Activated CD4-positive, alpha-beta memory T cell treated with anti-CD3 and anti-CD28 coated beads for 36 hours (primary cell): ENCODE measurements at regions of chr1 and their contacts with region 1.

Region 1: DNA sequence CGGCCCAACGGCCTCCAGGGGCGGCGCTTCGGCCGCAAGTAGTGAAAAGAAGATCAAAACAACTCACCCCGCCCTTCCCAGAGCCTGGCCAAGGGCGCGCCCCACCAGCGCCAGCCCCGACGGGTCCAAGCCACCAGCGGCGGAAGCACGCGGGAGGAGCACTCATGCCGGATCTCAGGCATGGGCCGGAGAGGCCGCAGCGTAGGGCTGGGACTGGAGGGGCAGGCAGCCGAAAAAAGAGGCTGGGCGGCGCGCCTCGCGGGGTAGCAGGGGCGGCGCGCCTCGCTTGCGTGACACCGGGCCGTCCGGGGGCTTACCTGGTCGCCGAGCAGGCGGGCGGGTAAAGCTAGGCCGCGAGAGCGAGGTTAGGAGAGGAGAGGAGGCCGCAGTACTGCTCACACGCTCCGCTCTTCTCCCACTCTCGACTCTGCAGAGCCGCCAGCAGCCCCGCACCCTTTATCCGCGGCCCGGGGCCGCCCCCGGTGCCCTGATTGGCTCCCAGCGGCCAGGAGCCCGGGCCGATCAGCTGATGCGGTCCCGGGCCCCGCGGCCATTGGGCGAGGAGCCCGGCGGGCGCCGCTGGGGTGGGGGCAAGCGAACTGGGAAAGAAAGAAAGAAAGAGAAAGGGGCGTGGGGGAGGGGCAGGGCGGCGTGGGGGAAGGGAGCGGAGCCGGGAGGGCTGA is at the start of gene GLUL:
- DNase-seq: peak; percentile 82
- H3K4me3 Mint-ChIP-seq: peak within 1 kb of the TSS; percentile 93
- H3K27ac Mint-ChIP-seq: peak within 1 kb of the TSS; percentile 80
- H3K4me1 Mint-ChIP-seq: peaks cover 22% of the 10 kb centered on the region
- H3K27me3 Mint-ChIP-seq: peaks cover 7% of the 10 kb centered on the region
- total RNA-seq, gene GLUL: 61.3 to 63.9 TPM

Region 2: DNA sequence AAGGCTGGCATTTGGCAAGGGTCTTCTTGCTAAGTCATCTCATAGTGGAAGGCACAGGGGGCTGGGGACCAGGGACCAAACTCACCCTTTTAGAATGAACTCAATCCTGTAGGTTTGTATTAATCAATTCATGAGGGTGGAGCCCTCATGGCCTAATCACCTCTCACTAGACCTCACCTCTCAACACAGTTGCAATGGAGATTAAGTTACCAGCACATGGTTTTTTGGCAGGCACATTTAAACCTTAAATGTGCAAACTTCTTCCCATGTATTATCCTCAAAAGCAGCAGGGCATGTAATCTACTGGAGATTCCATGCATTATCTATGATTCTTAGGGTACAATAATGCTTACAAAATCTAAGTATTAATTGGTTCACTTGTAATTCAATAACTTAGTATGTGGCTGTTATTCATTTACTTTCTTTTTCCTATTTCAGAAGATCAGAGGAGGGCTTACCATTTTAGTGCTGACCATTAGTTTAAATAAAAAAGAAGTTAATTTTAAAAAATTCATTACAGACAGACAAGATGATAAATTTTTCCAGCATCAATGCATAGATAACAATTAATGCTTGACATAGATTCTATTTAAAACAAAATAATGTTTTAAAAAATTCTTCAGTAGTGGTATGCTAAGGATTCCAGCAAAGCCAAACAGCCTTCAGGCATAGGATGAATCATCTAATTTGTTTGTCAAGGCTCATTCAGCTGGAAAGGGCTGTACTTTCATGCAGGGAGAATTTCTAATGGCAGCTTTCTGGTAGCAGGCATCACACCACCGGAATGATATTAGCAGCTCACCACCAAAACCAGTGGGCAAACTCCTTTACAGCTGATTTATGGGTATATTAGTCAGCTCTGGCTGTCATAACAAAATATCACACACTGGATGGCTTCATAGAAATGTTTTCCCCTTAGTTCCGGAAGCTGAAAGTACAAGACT is 205.4 kb before region 1 on chr1:
- CTCF ChIA-PET with region 1: interaction called, 6 read pairs
- POLR2A ChIA-PET with region 1: no interaction called
- intact Hi-C with region 1: loop called (anchors 2 kb)
- DNase-seq: no peak
- H3K4me3 Mint-ChIP-seq: no peak overlapping the region
- H3K27ac Mint-ChIP-seq: no peak overlapping the region
- H3K4me1 Mint-ChIP-seq: peaks cover 4% of the 10 kb centered on the region
- H3K27me3 Mint-ChIP-seq: peaks cover 11% of the 10 kb centered on the region

Region 3: GRCh38 chr1:182301467-182302198 is 89.9 kb before region 1 on chr1:
- CTCF ChIA-PET with region 1: interaction called, 4 read pairs
- POLR2A ChIA-PET with region 1: no interaction called
- intact Hi-C with region 1: loop called (anchors 1 kb)
- DNase-seq: peak; percentile 65
- H3K4me3 Mint-ChIP-seq: no peak overlapping the region
- H3K27ac Mint-ChIP-seq: peak overlapping the region; percentile 80
- H3K4me1 Mint-ChIP-seq: peaks cover 28% of the 10 kb centered on the region
- H3K27me3 Mint-ChIP-seq: no peaks in the 10 kb centered on the region

Region 4: GRCh38 chr1:182430263-182431068 is 39.0 kb after region 1 on chr1:
- CTCF ChIA-PET with region 1: no interaction called
- POLR2A ChIA-PET with region 1: no interaction called
- intact Hi-C with region 1: loop called (anchors 1 kb)
- DNase-seq: peak; percentile 62
- H3K4me3 Mint-ChIP-seq: no peak overlapping the region
- H3K27ac Mint-ChIP-seq: no peak overlapping the region
- H3K4me1 Mint-ChIP-seq: peaks cover 22% of the 10 kb centered on the region
- H3K27me3 Mint-ChIP-seq: no peaks in the 10 kb centered on the region